ENCODE measurements at regions of chr5 and their contacts with region 1.

Region 1: GRCh38 chr5:149828161-149828884 is 98.2 kb downstream of the PPARGC1B start:
- DNase-seq: peak; percentile 73 to 89 (median 78)
- ATAC-seq: peak; percentile 97
- H3K4me3 ChIP-seq: no peak overlapping the region
- H3K27ac ChIP-seq: no peak overlapping the region
- H3K4me1 ChIP-seq: no peaks in the 10 kb centered on the region; a peak in 1 of 5 replicates
- H3K27me3 ChIP-seq: no peaks in the 10 kb centered on the region
- CTCF ChIP-seq: peak; percentile 84 to 91 (median 87)
- EP300 ChIP-seq: no peak
- POLR2A ChIP-seq: no peak
- RAD21 ChIP-seq: peak; percentile 97 to 98

Region 2: GRCh38 chr5:149656576-149657182 is 171.6 kb before region 1 on chr5:
- CTCF ChIA-PET with region 1: interaction called, 22 read pairs
- POLR2A ChIA-PET with region 1: no interaction called
- in situ Hi-C with region 1: no loop called
- intact Hi-C with region 1: loop called (anchors 1 kb)
- DNase-seq: peak; percentile 58 to 70 (median 62)
- ATAC-seq: peak; percentile 80
- H3K4me3 ChIP-seq: no peak overlapping the region
- H3K27ac ChIP-seq: no peak overlapping the region
- H3K4me1 ChIP-seq: peaks cover 0 to 9% of the 10 kb centered on the region in 2 experiments; a peak in 2 of 5 replicates
- H3K27me3 ChIP-seq: no peaks in the 10 kb centered on the region; a peak in 1 of 5 replicates
- CTCF ChIP-seq: peak; percentile 81 to 91 (median 91)
- EP300 ChIP-seq: no peak
- POLR2A ChIP-seq: no peak
- RAD21 ChIP-seq: peak; percentile 77 to 88

Region 3: GRCh38 chr5:149782018-149782894 is 46.1 kb before region 1 on chr5:
- CTCF ChIA-PET with region 1: no interaction called
- POLR2A ChIA-PET with region 1: interaction called, 4 read pairs
- in situ Hi-C with region 1: no loop called
- intact Hi-C with region 1: loop called (anchors 5 kb)
- DNase-seq: no peak
- ATAC-seq: no peak
- H3K4me3 ChIP-seq: no peak overlapping the region
- H3K27ac ChIP-seq: no peak overlapping the region
- H3K4me1 ChIP-seq: peaks cover 9 to 12% of the 10 kb centered on the region in 2 experiments; a peak in 4 of 5 replicates
- H3K27me3 ChIP-seq: no peaks in the 10 kb centered on the region
- CTCF ChIP-seq: no peak
- EP300 ChIP-seq: no peak
- POLR2A ChIP-seq: no peak
- RAD21 ChIP-seq: no peak

Region 4: DNA sequence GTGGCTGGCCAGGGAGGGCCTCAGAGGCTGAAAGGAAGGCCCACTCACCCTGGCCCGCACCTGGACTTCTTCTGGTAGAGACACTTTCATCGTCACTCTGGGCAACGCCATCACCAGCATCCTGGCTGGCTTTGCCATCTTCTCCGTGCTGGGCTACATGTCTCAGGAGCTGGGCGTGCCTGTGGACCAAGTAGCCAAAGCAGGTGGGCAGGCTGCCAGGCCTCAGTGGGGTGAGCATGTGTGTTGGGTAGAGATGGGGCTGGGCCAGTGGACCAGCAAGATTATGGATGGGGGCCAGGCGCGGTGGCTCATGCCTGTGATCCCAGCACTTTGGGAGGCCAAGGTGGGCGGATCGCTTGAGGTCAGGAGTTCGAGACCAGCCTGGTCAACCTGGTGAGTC is 374.2 kb after region 1 on chr5:
- CTCF ChIA-PET with region 1: no interaction called
- POLR2A ChIA-PET with region 1: no interaction called
- in situ Hi-C with region 1: no loop called
- intact Hi-C with region 1: no loop called
- DNase-seq: no peak
- ATAC-seq: no peak
- H3K4me3 ChIP-seq: no peak overlapping the region
- H3K27ac ChIP-seq: no peak overlapping the region
- H3K4me1 ChIP-seq: peaks cover 0 to 3% of the 10 kb centered on the region in 2 experiments; a peak in 1 of 5 replicates
- H3K27me3 ChIP-seq: peaks cover 23 to 63% of the 10 kb centered on the region in 2 experiments; a peak in 4 of 5 replicates
- CTCF ChIP-seq: no peak
- EP300 ChIP-seq: no peak
- POLR2A ChIP-seq: no peak
- RAD21 ChIP-seq: no peak

Region 5: DNA sequence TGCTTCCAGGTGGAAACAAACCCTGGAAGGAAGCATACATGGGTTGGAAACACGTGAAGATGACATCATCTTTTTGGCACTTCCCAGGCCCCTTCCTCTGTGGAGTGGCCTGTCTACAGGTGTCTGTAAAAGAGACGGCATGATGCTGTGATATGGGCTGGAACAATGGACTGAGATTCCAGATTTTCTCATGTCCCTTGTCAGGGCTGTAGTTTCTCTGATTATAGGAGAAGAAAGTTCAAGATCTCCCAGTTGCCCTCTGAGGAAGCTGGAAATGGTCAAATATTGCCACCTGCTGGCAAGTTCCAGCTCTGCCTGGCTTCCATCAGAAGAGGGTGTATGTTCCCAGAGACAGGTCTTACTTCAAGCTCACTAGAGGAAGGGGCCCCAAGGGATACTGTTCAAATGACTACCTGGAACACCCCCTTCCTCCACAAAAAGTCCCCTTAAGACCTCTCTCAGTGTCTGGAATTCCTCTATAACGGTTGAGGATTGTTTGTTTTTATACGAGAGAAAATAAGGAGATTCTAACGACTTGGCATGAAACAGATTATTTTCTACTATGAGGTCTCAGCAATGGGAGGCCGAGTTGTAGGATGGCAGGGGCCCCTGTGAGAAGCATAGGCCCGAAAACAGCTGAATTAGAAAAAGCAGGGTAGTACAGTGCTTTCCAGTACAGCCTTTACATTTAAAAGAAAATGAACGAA is 1336.5 kb after region 1 on chr5:
- CTCF ChIA-PET with region 1: no interaction called
- POLR2A ChIA-PET with region 1: no interaction called
- in situ Hi-C with region 1: no loop called
- intact Hi-C with region 1: no loop called
- DNase-seq: peak; percentile 64 to 87 (median 71)
- ATAC-seq: peak; percentile 99
- H3K4me3 ChIP-seq: no peak overlapping the region
- H3K27ac ChIP-seq: no peak overlapping the region
- H3K4me1 ChIP-seq: no peaks in the 10 kb centered on the region; a peak in 1 of 5 replicates
- H3K27me3 ChIP-seq: peaks cover 2 to 11% of the 10 kb centered on the region in 2 experiments; a peak in 3 of 5 replicates
- CTCF ChIP-seq: peak; percentile 91 to 98 (median 93)
- EP300 ChIP-seq: no peak
- POLR2A ChIP-seq: no peak
- RAD21 ChIP-seq: peak; percentile 96 to 98